ENCODE measurements at regions of chr6 and their contacts with region 1.

Region 1: DNA sequence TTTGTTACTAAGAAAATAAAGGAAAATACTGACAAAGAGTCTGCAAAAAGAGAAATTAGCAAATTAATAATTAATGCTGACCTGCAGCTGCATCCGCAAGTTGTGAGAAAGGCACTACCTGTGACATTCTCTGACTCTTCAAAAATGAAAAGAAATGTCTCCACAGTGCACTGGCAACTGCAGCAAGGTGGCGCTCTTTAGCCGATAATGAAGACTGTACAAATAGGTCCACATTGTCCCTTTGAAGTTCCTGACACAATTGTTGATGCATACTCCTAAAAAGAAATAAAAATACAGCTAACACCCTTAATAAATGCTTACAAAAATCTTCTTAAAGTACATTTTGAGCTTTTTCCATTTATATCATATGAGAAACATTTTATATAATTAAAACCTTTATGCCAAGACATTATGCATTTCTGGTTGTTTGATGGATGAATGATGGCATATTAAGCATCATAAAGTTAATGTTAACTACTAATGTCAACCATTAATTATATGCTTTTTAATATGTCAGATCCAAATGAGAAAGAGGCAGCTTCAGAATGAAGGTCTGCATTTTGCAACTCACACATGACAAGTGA is 96.5 kb downstream of the MMS22L start:
- DNase-seq: peak; percentile 33 to 72 (median 60)
- ATAC-seq: peak; percentile 65
- H3K4me3 ChIP-seq: no peak overlapping the region
- H3K4me3 Mint-ChIP-seq: no peak overlapping the region
- H3K27ac ChIP-seq: no peak overlapping the region
- H3K27ac Mint-ChIP-seq: no peak overlapping the region
- H3K4me1 ChIP-seq: no peaks in the 10 kb centered on the region
- H3K4me1 Mint-ChIP-seq: no peaks in the 10 kb centered on the region
- H3K27me3 ChIP-seq: no peaks in the 10 kb centered on the region
- H3K27me3 Mint-ChIP-seq: no peaks in the 10 kb centered on the region
- CTCF ChIP-seq: peak; percentile 91

Region 2: DNA sequence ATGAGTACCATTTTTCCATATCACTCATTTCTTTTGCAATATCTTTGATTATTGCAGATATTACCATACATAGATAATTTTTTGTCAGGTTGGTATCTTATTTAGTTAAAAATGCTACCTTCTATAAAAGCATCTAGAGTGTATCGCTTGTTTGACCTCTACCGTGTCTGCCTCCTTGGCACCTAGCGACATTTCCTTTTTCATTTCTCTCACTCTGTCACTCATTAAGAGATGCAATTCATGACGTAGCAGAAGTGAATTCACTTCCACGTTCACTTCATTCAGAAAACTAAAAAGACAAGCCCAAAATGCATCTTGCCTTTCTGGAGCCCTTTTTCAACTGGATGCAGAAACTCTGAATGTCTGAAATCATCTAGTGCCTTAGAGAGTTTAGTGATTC is 76.4 kb before region 1 on chr6:
- CTCF ChIA-PET with region 1: no interaction called
- POLR2A ChIA-PET with region 1: no interaction called
- intact Hi-C with region 1: no loop called
- DNase-seq: no peak
- ATAC-seq: no peak
- H3K4me3 ChIP-seq: no peak overlapping the region
- H3K4me3 Mint-ChIP-seq: no peak overlapping the region
- H3K27ac ChIP-seq: no peak overlapping the region
- H3K27ac Mint-ChIP-seq: no peak overlapping the region
- H3K4me1 ChIP-seq: no peaks in the 10 kb centered on the region
- H3K4me1 Mint-ChIP-seq: peaks cover 10% of the 10 kb centered on the region
- H3K27me3 ChIP-seq: no peaks in the 10 kb centered on the region
- H3K27me3 Mint-ChIP-seq: no peaks in the 10 kb centered on the region
- CTCF ChIP-seq: no peak

Region 3: DNA sequence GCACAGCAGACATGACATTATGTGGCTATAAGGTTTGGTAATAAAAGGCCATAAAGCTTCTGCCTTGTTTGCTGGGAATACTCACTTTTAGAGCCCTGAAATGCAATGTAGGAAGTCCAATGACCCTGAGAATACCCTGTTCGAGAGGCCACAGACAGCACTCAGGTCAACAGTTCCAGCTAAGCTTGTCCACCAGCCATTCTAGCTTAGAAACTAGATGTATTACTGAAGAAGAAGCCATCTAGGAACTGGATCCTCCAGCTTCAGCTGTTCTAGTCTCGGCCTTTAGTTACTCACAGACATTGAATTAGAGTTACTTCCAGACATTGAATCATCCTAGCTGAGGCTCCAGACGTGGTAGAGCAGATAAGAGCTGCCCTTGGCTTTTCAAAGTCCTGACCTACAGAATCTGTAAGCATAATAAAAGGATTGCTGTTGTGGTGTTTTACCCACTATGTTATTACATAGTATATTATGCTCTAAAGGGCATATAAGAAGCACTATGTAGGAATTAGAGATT is 11.6 kb after region 1 on chr6:
- CTCF ChIA-PET with region 1: interaction called, 33 read pairs
- POLR2A ChIA-PET with region 1: no interaction called
- intact Hi-C with region 1: no loop called
- DNase-seq: no peak
- ATAC-seq: no peak
- H3K4me3 ChIP-seq: no peak overlapping the region
- H3K4me3 Mint-ChIP-seq: no peak overlapping the region
- H3K27ac ChIP-seq: no peak overlapping the region
- H3K27ac Mint-ChIP-seq: no peak overlapping the region
- H3K4me1 ChIP-seq: no peaks in the 10 kb centered on the region
- H3K4me1 Mint-ChIP-seq: no peaks in the 10 kb centered on the region
- H3K27me3 ChIP-seq: no peaks in the 10 kb centered on the region
- H3K27me3 Mint-ChIP-seq: no peaks in the 10 kb centered on the region
- CTCF ChIP-seq: no peak

Measured in CD8-positive, alpha-beta T cell (primary cell).